Motor neuron (in vitro differentiated cells): ENCODE measurements at regions of chr11 and their contacts with region 1.

Region 1: GRCh38 chr11:19553683-19554333 is 158.8 kb upstream of the NAV2 start:
- ATAC-seq: peak; percentile 53 to 93 (median 66)
- H3K4me3 ChIP-seq: no peak overlapping the region
- H3K27ac ChIP-seq: peak overlapping the region in 1 of 2 donors; percentile 41
- H3K4me1 ChIP-seq: peaks cover 30 to 32% of the 10 kb centered on the region in 2 donors

Region 2: DNA sequence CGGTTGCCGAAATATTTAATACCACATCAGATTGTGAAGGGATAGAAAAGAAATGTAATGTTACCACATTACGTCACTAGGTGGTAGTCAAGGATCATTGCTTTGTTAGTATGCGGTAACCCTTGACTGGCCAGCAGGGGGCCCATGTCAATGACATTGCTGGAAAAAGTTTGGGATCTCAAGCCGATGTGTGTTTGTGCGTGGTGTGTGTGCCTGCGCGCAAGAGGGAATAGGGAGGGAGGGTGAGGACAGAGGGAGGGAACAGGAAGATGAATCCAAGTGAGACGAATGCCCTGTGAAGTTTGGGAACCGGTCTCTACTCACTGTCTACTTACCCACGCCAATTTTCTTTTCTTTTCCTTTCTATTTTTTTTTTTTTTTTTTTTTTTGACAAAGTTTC is 482.6 kb before region 1 on chr11:
- in situ Hi-C with region 1: loop called in 7 of 9 experiments (anchors 25 kb)
- ATAC-seq: peak; percentile 81 to 100 (median 90)
- H3K4me3 ChIP-seq: no peak overlapping the region
- H3K27ac ChIP-seq: no peak overlapping the region
- H3K4me1 ChIP-seq: no peaks in the 10 kb centered on the region

Region 3: DNA sequence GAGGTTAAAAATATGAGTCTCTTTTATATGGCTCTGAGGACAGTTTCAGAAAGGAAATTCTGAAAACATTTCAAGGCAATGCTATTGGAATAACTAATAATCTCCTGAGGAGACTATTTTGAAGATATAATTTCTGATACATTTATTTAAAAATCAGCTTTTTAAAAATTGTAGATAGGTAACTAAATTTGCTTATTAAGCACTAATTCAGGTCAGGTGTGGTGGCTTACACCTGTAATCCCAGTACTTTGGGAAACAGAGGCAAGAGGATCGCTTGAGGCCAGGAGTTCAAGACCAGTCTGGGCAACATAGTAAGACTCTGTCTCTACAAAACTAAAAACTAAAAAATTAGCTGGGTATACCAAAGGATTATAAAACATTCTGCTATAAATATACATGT is 419.8 kb before region 1 on chr11:
- in situ Hi-C with region 1: no loop called
- ATAC-seq: no peak
- H3K4me3 ChIP-seq: no peak overlapping the region
- H3K27ac ChIP-seq: no peak overlapping the region
- H3K4me1 ChIP-seq: no peaks in the 10 kb centered on the region

Region 4: GRCh38 chr11:19259487-19260345 is 294.1 kb before region 1 on chr11:
- in situ Hi-C with region 1: loop called in 1 of 9 experiments (anchors 10 kb)
- ATAC-seq: peak in 4 of 8 experiments; percentile 49 to 83 (median 78)
- H3K4me3 ChIP-seq: no peak overlapping the region
- H3K27ac ChIP-seq: no peak overlapping the region
- H3K4me1 ChIP-seq: no peaks in the 10 kb centered on the region

Region 5: GRCh38 chr11:19890308-19890707 is 336.5 kb after region 1 on chr11:
- in situ Hi-C with region 1: loop called in 1 of 9 experiments (anchors 25 kb)
- ATAC-seq: peak in 4 of 8 experiments; percentile 23 to 74 (median 42)
- H3K4me3 ChIP-seq: no peak overlapping the region
- H3K27ac ChIP-seq: no peak overlapping the region
- H3K4me1 ChIP-seq: peaks cover 0 to 13% of the 10 kb centered on the region in 2 donors

Region 6: GRCh38 chr11:20127671-20128527 is 574.1 kb after region 1 on chr11:
- in situ Hi-C with region 1: loop called in 1 of 9 experiments (anchors 25 kb)
- ATAC-seq: peak; percentile 67 to 90 (median 86)
- H3K4me3 ChIP-seq: no peak overlapping the region
- H3K27ac ChIP-seq: no peak overlapping the region
- H3K4me1 ChIP-seq: no peaks in the 10 kb centered on the region

Region 7: DNA sequence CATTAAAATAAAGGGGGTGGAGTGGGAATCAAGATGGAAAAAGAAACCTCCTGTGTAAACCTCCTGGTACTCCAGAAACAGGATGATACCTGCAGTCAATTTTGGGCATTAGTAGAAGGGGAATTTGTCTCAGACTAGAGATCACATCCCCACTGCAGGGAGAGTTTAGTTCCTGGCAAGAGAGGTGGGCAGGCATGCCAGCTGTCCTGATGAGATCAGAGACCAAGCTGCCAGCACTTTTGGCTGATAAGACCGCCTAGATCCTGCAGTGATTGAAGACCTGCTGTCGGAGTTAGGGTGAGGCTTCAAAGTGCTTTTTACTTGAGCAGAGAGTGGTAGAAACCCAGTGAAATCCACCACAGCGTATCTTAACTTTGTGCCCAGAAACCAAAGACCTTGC is 1085.9 kb after region 1 on chr11:
- in situ Hi-C with region 1: no loop called
- ATAC-seq: no peak
- H3K4me3 ChIP-seq: no peak overlapping the region
- H3K27ac ChIP-seq: no peak overlapping the region
- H3K4me1 ChIP-seq: peaks cover 4 to 16% of the 10 kb centered on the region in 2 donors